Body of pancreas (tissue), 4 donors: ENCODE measurements at regions of chr11 and their contacts with region 1.

Region 1: GRCh38 chr11:18012863-18013781 is at the start of gene SERGEF:
- DNase-seq: peak; percentile 96 to 98 (median 98)
- ATAC-seq: peak; percentile 98
- H3K4me3 ChIP-seq: peak within 1 kb of the TSS; percentile 46 to 76
- H3K27ac ChIP-seq: peak within 1 kb of the TSS; percentile 55 to 91 (median 83)
- H3K4me1 ChIP-seq: peaks cover 15% of the 10 kb centered on the region
- H3K27me3 ChIP-seq: no peaks in the 10 kb centered on the region
- CTCF ChIP-seq: peak in 4 of 7 experiments; percentile 7 to 71 (median 32)
- POLR2A ChIP-seq: peak; percentile 74 to 97 (median 95)
- total RNA-seq, gene SERGEF: 20.8 to 28.7 TPM

Region 2: DNA sequence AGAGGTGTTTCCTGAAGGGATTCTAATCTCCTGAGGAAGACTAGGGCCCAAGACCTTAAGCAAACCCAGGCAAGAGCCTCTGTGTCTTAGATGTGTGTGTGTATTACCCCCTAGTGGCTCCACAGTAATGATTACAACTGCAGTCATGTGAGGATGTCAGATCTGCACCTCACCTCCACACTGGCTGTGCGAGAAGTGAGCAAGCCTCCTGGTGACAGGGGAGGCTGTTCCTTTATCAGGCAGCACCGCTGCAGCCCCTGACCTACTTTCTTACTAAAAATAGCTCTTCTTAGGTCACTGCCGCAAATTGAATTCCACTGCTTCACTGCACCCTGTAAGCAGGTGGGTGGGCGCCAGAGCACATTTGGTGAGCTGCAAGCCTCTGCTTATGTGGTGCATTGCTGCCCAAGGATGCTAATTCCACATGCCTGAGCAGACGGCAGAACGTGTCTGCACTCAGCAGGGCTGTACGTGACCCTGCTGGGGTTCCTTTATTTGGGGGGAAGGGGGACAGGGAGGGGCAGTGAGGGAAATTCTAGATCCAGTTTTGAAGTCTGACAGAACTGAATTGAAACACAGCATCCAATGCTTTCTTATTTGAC is 166.2 kb before region 1 on chr11:
- intact Hi-C with region 1: no loop called
- DNase-seq: no peak
- ATAC-seq: no peak
- H3K4me3 ChIP-seq: no peak overlapping the region
- H3K27ac ChIP-seq: no peak overlapping the region
- H3K4me1 ChIP-seq: no peaks in the 10 kb centered on the region
- H3K27me3 ChIP-seq: no peaks in the 10 kb centered on the region
- CTCF ChIP-seq: no peak
- POLR2A ChIP-seq: no peak

Region 3: DNA sequence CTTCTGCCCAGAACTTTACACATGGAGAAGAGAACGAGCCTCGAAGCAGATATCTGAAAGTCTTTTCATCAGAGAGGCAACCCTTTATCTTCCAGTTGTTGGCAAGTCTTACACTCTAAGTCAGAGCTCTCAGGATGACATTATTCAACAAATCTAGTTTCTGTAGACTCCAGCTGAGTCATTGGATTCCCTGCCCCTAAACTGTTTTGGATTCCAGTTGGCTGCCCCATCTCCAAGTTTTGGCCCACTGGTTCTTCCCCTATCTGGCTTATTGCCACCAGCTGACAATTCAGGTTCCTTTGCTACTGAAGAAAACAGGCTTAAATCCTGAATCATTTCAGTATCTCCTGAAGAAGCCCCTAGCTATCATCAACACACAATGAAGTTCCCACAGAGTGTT is 78.6 kb after region 1 on chr11:
- intact Hi-C with region 1: loop called (anchors 10 kb)
- DNase-seq: no peak
- ATAC-seq: no peak
- H3K4me3 ChIP-seq: no peak overlapping the region
- H3K27ac ChIP-seq: no peak overlapping the region
- H3K4me1 ChIP-seq: no peaks in the 10 kb centered on the region
- H3K27me3 ChIP-seq: no peaks in the 10 kb centered on the region
- CTCF ChIP-seq: no peak
- POLR2A ChIP-seq: no peak

Region 4: DNA sequence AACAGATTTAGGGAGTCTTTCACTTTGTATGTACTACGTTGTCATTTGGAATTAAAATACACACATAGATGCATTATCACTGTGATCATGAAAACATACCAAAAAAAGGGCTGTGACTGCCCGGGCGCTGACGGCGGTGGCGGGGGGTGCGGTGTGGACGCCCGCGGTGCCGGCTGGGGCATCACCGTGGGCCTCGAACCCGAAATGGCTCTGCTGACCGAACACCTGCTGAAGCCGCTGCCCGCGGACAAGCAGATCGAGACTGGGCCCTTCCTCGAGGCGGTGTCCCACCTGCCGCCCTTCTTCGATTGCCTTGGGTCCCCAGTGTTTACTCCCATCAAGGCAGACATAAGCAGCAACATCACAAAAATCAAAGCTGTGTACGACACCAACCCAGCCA is 175.7 kb after region 1 on chr11:
- intact Hi-C with region 1: no loop called
- DNase-seq: no peak
- ATAC-seq: no peak
- H3K4me3 ChIP-seq: no peak overlapping the region
- H3K27ac ChIP-seq: no peak overlapping the region
- H3K4me1 ChIP-seq: no peaks in the 10 kb centered on the region
- H3K27me3 ChIP-seq: no peaks in the 10 kb centered on the region
- CTCF ChIP-seq: no peak
- POLR2A ChIP-seq: no peak